ENCODE measurements at regions of chr1 and their contacts with region 1.

Region 1: DNA sequence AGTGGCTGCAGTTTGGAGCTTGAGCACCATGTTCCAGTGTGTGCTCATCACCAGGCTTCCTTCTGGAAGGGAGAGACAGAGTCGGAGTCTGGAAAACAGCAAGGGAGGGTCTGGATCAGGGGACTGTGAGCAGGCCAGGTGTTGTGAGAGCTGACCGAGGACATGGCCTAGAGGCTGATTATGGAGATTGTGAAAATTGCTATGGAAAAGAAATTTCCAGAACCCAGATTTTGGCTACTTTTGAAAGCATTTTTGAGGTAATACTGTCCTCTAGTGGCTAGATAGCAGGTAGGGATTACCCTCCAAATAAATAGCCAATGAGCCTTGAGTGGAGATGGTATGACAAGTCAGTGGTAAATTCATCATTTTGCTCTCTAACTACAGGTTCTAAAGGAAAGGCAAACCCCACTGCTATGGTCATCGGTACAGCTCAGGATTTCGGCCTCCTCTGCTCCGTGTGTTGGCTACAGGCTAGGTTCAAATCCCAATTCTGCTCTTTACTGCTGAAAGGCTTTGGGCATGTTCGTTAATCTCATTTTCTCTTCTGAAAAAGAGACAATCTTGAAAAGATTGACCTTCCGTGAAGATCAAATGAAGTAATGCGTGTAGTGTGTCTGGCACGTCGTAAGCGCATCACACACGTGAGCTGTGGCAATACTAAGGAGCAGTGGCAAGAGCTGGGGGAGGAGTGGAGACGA is 1.0 kb upstream of the HAO2 start:
- DNase-seq: peak; percentile 27 to 59 (median 40)
- ATAC-seq: peak; percentile 85
- H3K4me3 ChIP-seq: no peak overlapping the region
- H3K27ac ChIP-seq: no peak overlapping the region
- H3K4me1 ChIP-seq: no peaks in the 10 kb centered on the region
- H3K27me3 ChIP-seq: peaks cover 9% of the 10 kb centered on the region in 2 experiments; a peak in 3 of 5 replicates
- CTCF ChIP-seq: peak; percentile 67 to 96 (median 87)
- EP300 ChIP-seq: no peak
- POLR2A ChIP-seq: no peak
- RAD21 ChIP-seq: peak; percentile 93 to 96

Region 2: GRCh38 chr1:119286587-119287181 is 80.9 kb before region 1 on chr1:
- CTCF ChIA-PET with region 1: interaction called, 6 read pairs
- POLR2A ChIA-PET with region 1: no interaction called
- in situ Hi-C with region 1: no loop called
- intact Hi-C with region 1: loop called (anchors 1 kb)
- DNase-seq: peak; percentile 66 to 72 (median 67)
- ATAC-seq: peak; percentile 99
- H3K4me3 ChIP-seq: no peak overlapping the region
- H3K27ac ChIP-seq: no peak overlapping the region
- H3K4me1 ChIP-seq: no peaks in the 10 kb centered on the region
- H3K27me3 ChIP-seq: no peaks in the 10 kb centered on the region
- CTCF ChIP-seq: peak; percentile 60 to 72 (median 68)
- EP300 ChIP-seq: no peak
- POLR2A ChIP-seq: no peak
- RAD21 ChIP-seq: peak; percentile 56 to 71